ENCODE measurements at regions of chr7 and their contacts with region 1.

Region 1: DNA sequence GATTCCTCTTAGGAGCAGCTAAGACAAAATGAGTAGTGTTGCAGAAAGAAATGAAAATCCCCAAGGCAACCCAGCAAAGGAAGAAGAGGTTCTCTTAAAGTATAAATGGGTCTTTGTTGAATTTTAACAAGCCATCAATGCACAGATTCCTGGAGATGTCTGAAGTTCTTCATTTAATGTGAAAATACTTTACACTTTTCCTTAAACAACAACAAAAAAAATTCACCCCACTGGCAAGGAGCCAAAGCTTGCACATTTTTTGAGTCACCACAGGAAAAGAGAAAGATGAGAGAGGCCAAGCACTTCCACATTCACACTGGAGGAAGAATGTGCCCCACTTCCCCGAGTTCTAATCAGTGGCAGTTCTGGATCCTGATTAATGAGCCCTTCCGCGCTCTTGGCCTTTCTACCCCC is 286.4 kb upstream of the MEOX2 start:
- DNase-seq: peak in 1 of 2 donors; percentile 29
- ATAC-seq: peak in 1 of 8 donors; percentile 45
- H3K4me3 ChIP-seq: no peak overlapping the region
- H3K27ac ChIP-seq: peak overlapping the region in 3 of 10 donors; percentile 3 to 24 (median 3)
- H3K4me1 ChIP-seq: peaks cover 0 to 14% (median 7%) of the 10 kb centered on the region in 9 donors
- H3K27me3 ChIP-seq: no peaks in the 10 kb centered on the region
- CTCF ChIP-seq: no peak

Region 2: DNA sequence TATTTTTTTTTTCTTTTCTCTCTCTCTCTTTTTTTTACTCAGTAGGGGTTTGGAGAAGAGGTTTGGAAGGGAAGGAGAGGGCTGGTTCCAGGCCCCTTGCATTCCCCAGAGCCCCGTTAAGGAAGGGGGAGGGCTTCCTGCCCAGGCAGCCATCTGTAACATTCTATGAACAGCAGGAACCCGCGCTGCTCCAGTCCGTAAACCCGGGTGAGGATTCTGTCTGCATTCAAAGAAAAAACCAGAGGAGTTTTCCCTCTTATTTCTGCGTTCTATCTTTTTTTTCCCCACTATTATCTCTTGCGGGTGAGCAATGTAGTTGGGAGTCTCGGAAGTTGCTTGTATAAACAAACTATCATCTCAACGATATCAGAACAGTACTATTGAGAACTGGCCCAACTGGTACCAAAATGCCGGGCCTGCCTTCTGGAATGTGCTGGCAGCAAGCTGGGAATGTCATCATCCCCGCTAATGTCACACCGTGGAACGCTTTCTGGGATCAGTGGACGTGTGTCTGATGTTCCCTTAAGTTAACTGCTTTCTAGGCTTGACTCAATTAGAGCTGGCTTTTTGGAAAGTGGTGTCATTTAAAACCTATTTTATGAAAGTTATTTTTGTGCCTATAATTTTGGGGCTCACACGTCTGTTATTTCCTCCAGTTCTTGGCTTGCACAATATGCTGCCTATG is 133.3 kb before region 1 on chr7:
- intact Hi-C with region 1: no loop called
- DNase-seq: peak; percentile 69 to 83
- ATAC-seq: peak; percentile 91 to 99 (median 98)
- H3K4me3 ChIP-seq: peak overlapping the region in 9 of 10 donors; percentile 20 to 55 (median 43)
- H3K27ac ChIP-seq: peak overlapping the region; percentile 46 to 95 (median 80)
- H3K4me1 ChIP-seq: peaks cover 0 to 43% (median 16%) of the 10 kb centered on the region in 9 donors
- H3K27me3 ChIP-seq: no peaks in the 10 kb centered on the region
- CTCF ChIP-seq: no peak

Region 3: GRCh38 chr7:16055263-16055976 is 82.6 kb after region 1 on chr7:
- intact Hi-C with region 1: loop called in 1 of 10 experiments (anchors 10 kb)
- DNase-seq: no peak
- ATAC-seq: peak in 3 of 8 donors; percentile 16 to 52 (median 31)
- H3K4me3 ChIP-seq: no peak overlapping the region
- H3K27ac ChIP-seq: no peak overlapping the region
- H3K4me1 ChIP-seq: peaks cover 0 to 24% (median 2%) of the 10 kb centered on the region in 9 donors
- H3K27me3 ChIP-seq: no peaks in the 10 kb centered on the region
- CTCF ChIP-seq: no peak

Measured in heart right ventricle (tissue), 16 donors.